Activated CD4-positive, alpha-beta T cell treated with anti-CD3 and anti-CD28 coated beads, Interleukin-2, amount 10 ng/mL, durations not matched to agents 24 days and 14 days (primary cell): ENCODE measurements at regions of chr21 and their contacts with region 1.

Region 1: GRCh38 chr21:38355992-38356797 is 99.4 kb downstream of the KCNJ15 start:
- DNase-seq: peak; percentile 92
- H3K4me3 Mint-ChIP-seq: no peak overlapping the region
- H3K27ac Mint-ChIP-seq: no peak overlapping the region
- H3K4me1 Mint-ChIP-seq: peaks cover 16% of the 10 kb centered on the region
- H3K27me3 Mint-ChIP-seq: no peaks in the 10 kb centered on the region

Region 2: DNA sequence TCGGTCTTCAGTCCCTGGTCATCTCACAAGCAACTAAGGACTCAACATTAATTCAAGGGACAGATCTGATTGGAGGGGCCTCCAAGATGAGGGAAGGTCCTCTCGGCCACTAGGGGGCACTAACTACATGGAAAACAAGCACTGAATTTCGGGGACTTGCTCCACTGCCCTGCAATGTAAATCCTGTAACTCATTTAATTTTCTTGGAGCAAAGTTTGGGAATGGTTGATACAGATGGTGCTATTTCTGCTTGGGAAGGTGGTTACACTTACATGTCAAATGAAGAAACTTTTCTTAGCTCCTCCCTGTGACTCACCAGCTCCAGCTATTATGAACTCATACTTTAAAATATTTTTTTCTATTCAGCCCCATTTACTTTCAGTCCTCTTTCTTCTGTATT is 196.8 kb before region 1 on chr21:
- intact Hi-C with region 1: loop called (anchors 1 kb)
- DNase-seq: peak; percentile 84
- H3K4me3 Mint-ChIP-seq: no peak overlapping the region
- H3K27ac Mint-ChIP-seq: no peak overlapping the region
- H3K4me1 Mint-ChIP-seq: peaks cover 2% of the 10 kb centered on the region
- H3K27me3 Mint-ChIP-seq: peaks cover 15% of the 10 kb centered on the region

Region 3: GRCh38 chr21:38170280-38170679 is 185.9 kb before region 1 on chr21:
- intact Hi-C with region 1: loop called (anchors 1 kb)
- DNase-seq: no peak
- H3K4me3 Mint-ChIP-seq: no peak overlapping the region
- H3K27ac Mint-ChIP-seq: no peak overlapping the region
- H3K4me1 Mint-ChIP-seq: no peaks in the 10 kb centered on the region
- H3K27me3 Mint-ChIP-seq: peaks cover 4% of the 10 kb centered on the region

Region 4: GRCh38 chr21:38219049-38219628 is 137.1 kb before region 1 on chr21:
- intact Hi-C with region 1: loop called (anchors 1 kb)
- DNase-seq: peak; percentile 89
- H3K4me3 Mint-ChIP-seq: no peak overlapping the region
- H3K27ac Mint-ChIP-seq: no peak overlapping the region
- H3K4me1 Mint-ChIP-seq: peaks cover 3% of the 10 kb centered on the region
- H3K27me3 Mint-ChIP-seq: no peaks in the 10 kb centered on the region

Region 5: DNA sequence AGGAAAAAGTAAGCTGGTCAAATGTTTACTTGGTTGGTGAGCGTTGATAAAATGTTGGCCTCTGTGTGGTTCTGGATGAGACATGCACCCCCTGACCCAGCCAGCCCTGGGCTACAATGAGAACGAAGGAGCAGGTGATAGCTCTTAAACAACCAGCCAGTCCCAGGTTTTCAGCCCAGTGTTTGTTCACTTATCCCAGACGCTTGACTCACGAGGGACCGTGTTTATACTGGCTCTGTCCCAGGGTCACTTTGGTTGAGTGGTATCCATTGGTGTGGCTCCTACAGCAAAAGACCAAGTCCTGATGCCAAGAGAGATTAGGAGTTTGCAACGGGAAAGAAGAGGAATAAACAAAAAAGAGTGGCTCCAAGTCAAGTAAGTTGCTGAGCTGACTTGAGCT is 12.5 kb before region 1 on chr21:
- intact Hi-C with region 1: no loop called
- DNase-seq: no peak
- H3K4me3 Mint-ChIP-seq: no peak overlapping the region
- H3K27ac Mint-ChIP-seq: no peak overlapping the region
- H3K4me1 Mint-ChIP-seq: peaks cover 5% of the 10 kb centered on the region
- H3K27me3 Mint-ChIP-seq: no peaks in the 10 kb centered on the region